Activated CD4-positive, alpha-beta T cell treated with anti-CD3 and anti-CD28 coated beads, Interleukin-2, amount 10 ng/mL, durations not matched to agents 7 days and 5 days (primary cell): ENCODE measurements at regions of chr11 and their contacts with region 1.

Region 1: GRCh38 chr11:66855574-66856495 is 1.0 kb upstream of the LRFN4 start:
- DNase-seq: peak; percentile 88
- H3K4me3 Mint-ChIP-seq: peak overlapping the region; percentile 85
- H3K27ac Mint-ChIP-seq: peak overlapping the region; percentile 86
- H3K4me1 Mint-ChIP-seq: peaks cover 29% of the 10 kb centered on the region
- H3K27me3 Mint-ChIP-seq: no peaks in the 10 kb centered on the region

Region 2: DNA sequence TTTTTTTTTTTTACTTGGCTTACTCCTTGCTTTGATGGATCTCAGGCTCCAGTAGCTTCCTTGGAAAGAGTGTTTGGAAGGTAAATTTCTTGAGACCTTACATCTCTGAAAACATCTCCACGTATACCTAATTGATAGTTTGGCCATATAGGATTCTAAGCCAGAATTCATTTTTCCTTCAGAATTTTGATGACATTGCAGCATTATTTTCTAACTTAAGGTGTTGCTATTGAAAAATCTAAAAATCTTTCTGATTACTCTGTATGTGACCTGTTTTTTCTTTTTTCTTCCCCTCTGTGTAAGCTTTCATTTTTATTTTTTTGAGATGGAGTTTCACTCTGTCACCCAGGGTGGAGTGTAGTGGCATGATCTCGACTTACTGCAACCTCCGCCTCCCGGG is 103.7 kb before region 1 on chr11:
- CTCF ChIA-PET with region 1: no interaction called
- POLR2A ChIA-PET with region 1: no interaction called
- DNase-seq: no peak
- H3K4me3 Mint-ChIP-seq: no peak overlapping the region
- H3K27ac Mint-ChIP-seq: no peak overlapping the region
- H3K4me1 Mint-ChIP-seq: no peaks in the 10 kb centered on the region
- H3K27me3 Mint-ChIP-seq: no peaks in the 10 kb centered on the region

Region 3: GRCh38 chr11:66842896-66843775 is 12.7 kb before region 1 on chr11 and contains the start of gene RCE1:
- CTCF ChIA-PET with region 1: interaction called, 27 read pairs
- POLR2A ChIA-PET with region 1: no interaction called
- DNase-seq: peak; percentile 91
- H3K4me3 Mint-ChIP-seq: peak within 1 kb of the TSS; percentile 85
- H3K27ac Mint-ChIP-seq: peak within 1 kb of the TSS; percentile 96
- H3K4me1 Mint-ChIP-seq: peaks cover 50% of the 10 kb centered on the region
- H3K27me3 Mint-ChIP-seq: no peaks in the 10 kb centered on the region
- total RNA-seq, gene RCE1: 23.1 to 23.7 TPM